IMR-90 (cell line): ENCODE measurements at regions of chr10 and their contacts with region 1.

Region 1: DNA sequence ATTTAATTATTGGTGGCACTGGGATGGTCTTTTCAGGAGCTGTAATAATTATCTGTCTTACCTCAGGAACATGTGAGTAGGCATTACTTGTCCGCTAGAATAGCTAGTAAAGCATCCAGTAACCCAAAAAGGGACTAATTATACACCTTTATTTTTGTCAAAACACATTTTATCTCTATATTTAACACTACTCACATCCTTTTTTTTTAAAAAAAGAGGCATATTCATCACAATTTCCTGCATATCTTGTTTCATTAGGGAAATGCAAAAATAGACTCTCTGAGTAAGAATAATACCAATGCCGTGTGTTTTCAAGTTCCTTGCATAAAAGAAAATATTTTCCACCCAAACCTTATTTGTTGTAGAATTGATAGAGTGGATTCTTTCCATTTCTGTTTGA is 99.5 kb downstream of the VTI1A start:
- DNase-seq: no peak
- ATAC-seq: no peak
- H3K4me3 ChIP-seq: no peak overlapping the region
- H3K27ac ChIP-seq: no peak overlapping the region
- H3K4me1 ChIP-seq: no peaks in the 10 kb centered on the region
- H3K27me3 ChIP-seq: no peaks in the 10 kb centered on the region
- CTCF ChIP-seq: no peak
- POLR2A ChIP-seq: no peak
- RAD21 ChIP-seq: no peak

Region 2: DNA sequence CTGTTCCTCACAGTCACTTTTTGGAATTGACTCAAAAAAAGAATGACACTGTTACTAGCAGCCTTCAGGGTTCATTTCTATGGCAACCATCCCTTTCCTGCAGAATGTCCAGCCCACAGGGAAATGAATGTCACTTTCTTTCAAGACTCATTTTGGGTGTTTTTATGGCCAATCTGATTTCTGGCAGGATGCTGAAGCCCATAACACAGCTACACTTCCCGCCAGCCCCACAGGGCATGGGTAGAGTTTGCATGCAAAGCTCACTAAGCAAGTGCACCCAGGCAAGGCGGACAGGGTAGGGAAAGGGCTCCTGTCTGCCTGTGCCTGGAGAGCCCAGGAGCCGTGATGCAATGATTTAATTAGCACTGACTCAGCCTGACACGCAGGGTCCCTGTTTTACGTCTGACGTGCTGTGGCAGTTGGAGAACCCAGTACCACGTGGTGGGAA is 336.8 kb before region 1 on chr10:
- CTCF ChIA-PET with region 1: no interaction called
- POLR2A ChIA-PET with region 1: interaction called, 11 read pairs
- dilution Hi-C with region 1: no loop called
- in situ Hi-C with region 1: no loop called
- intact Hi-C with region 1: no loop called
- DNase-seq: no peak
- ATAC-seq: no peak
- H3K4me3 ChIP-seq: no peak overlapping the region
- H3K27ac ChIP-seq: no peak overlapping the region
- H3K4me1 ChIP-seq: no peaks in the 10 kb centered on the region; the same call in none of the 2 replicates
- H3K27me3 ChIP-seq: no peaks in the 10 kb centered on the region; the same call in none of the 2 replicates
- CTCF ChIP-seq: no peak
- POLR2A ChIP-seq: no peak
- RAD21 ChIP-seq: no peak

Region 3: DNA sequence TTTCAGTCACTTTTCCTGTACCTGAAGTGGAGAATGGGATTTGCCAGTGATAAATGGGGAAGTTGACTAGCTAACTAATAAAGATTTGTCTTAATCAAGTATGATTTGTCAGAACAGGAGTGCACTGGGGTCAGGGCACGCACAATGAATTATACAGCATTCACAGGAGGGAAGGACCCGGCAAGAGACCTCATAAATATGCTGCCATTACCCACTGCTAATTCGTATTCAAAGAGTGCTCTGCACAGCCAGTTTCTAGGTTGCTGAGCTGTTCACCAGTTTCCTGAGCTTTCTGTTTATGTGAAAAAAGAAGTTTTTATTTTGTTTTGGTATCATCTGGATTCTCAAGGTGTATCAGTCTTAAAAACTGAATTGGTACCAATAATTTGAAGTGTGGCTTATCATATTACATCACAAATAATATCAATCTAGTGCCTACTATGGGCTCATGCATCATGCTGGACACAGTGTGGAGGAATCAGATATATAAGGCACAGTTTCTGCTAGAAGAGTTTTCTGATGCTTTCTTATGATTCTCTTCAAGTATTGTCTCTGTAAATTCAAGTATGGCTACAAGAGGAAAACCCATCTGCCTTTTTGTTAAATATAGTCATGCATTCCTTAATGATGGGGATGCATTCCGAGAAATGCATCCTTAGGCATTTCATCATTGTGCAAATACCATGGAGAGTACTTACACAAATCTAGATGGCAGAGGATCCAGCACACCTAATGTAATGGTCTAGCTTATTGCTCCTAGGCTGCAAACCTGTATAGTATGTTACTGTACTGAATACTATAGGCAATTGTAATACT is 102.7 kb after region 1 on chr10:
- CTCF ChIA-PET with region 1: no interaction called
- POLR2A ChIA-PET with region 1: no interaction called
- dilution Hi-C with region 1: no loop called
- in situ Hi-C with region 1: no loop called
- intact Hi-C with region 1: no loop called
- DNase-seq: peak; percentile 74
- ATAC-seq: peak; percentile 70
- H3K4me3 ChIP-seq: no peak overlapping the region
- H3K27ac ChIP-seq: no peak overlapping the region
- H3K4me1 ChIP-seq: peaks cover 2% of the 10 kb centered on the region; the same call in 1 of the 2 replicates
- H3K27me3 ChIP-seq: no peaks in the 10 kb centered on the region
- CTCF ChIP-seq: no peak
- POLR2A ChIP-seq: no peak
- RAD21 ChIP-seq: no peak

Region 4: DNA sequence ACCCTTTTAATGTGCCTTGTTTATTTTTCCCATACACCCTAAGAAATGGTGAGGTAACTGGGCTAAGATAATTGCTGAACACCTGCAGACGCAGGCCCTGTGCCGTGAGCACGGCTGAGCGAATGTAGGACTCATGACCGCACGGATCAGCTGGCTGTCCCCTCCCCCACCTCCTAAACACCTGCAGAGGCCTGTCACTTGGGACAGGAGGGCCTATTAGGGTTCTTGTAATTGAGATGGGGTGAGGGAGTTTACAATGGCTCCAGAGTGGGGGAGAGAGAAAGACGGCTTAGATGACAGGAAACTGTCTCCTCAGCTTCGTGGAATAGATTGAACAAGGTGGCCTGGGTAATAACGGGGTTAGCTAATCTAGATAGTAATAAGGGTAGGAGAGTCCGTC is 714.7 kb after region 1 on chr10:
- CTCF ChIA-PET with region 1: no interaction called
- POLR2A ChIA-PET with region 1: no interaction called
- dilution Hi-C with region 1: no loop called
- in situ Hi-C with region 1: no loop called
- intact Hi-C with region 1: no loop called
- DNase-seq: no peak
- ATAC-seq: no peak
- H3K4me3 ChIP-seq: no peak overlapping the region
- H3K27ac ChIP-seq: no peak overlapping the region
- H3K4me1 ChIP-seq: no peaks in the 10 kb centered on the region
- H3K27me3 ChIP-seq: peaks cover 26% of the 10 kb centered on the region
- CTCF ChIP-seq: no peak
- POLR2A ChIP-seq: no peak
- RAD21 ChIP-seq: no peak

Region 5: DNA sequence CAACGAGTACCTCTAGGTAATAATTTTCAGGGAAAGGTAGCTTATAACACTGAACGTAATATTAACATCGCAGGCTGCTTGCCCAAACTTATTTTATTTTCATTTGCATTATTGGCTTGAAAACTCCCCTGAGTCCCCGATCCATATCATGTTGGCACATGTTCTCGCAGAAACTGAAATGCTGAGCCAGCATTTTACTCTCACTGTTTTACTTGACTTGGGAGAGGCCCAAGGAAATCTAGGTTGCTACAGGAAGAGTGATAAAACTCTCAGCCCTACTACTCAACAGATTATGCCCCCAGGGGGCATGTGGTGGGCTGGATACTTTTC is 822.9 kb after region 1 on chr10:
- CTCF ChIA-PET with region 1: no interaction called
- POLR2A ChIA-PET with region 1: interaction called, 16 read pairs
- dilution Hi-C with region 1: no loop called
- in situ Hi-C with region 1: no loop called
- intact Hi-C with region 1: no loop called
- DNase-seq: no peak
- ATAC-seq: no peak
- H3K4me3 ChIP-seq: no peak overlapping the region
- H3K27ac ChIP-seq: no peak overlapping the region
- H3K4me1 ChIP-seq: no peaks in the 10 kb centered on the region
- H3K27me3 ChIP-seq: peaks cover 4% of the 10 kb centered on the region; the same call in 1 of the 2 replicates
- CTCF ChIP-seq: no peak
- POLR2A ChIP-seq: no peak
- RAD21 ChIP-seq: no peak